ENCODE measurements at regions of chr16 and their contacts with region 1.

Region 1: DNA sequence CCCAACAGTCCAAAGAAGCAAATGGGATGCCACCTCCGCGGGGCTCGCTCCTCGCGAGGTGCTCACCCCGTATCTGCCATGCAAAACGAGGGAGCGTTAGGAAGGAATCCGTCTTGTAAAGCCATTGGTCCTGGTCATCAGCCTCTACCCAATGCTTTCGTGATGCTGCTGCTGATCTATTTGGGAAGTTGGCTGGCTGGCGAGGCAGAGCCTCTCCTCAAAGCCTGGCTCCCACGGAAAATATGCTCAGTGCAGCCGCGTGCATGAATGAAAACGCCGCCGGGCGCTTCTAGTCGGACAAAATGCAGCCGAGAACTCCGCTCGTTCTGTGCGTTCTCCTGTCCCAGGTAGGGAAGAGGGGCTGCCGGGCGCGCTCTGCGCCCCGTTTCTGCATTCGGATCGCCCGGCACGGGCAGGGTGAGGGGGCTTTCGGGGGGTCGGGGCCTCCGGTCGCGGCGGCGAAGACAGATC is at the start of gene CDH13:
- DNase-seq: peak; percentile 61
- H3K4me3 Mint-ChIP-seq: peak within 1 kb of the TSS; percentile 82
- H3K27ac Mint-ChIP-seq: peak within 1 kb of the TSS; percentile 96
- H3K4me1 Mint-ChIP-seq: peaks cover 36% of the 10 kb centered on the region
- H3K27me3 Mint-ChIP-seq: no peaks in the 10 kb centered on the region
- CTCF ChIP-seq: no peak
- total RNA-seq, gene CDH13: 49.3 and 55.2 TPM in 2 replicates

Region 2: DNA sequence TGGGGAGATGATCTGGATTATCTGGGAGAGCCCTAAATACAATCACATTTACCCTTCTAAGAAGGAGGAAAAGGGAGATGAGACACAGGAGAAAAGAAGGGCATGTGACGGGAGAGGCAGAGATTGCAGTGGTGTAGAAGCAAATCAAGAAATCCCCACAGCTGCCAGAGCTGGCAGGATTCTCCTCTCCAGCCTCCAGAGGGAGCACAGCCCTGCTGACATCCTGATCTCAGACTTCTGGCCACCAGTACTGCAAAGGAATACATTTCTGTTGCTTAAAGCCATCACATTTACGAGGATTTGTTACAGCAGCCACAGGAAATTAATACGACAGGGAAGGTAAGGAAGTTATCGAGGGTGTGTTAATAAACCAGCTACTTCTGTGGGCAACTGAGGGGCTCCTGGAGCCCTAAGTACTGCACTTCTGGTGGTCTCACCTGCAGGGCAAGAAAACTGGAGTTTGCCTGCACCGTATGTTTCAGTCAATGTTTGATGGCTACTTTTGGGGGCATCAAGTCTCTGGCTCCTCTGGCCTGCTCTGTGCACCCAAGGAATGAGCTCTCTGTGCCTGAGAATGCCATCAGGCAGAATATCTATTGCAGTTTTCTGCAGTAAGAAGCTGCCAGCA is 22.9 kb before region 1 on chr16:
- CTCF ChIA-PET with region 1: interaction called, 17 read pairs
- POLR2A ChIA-PET with region 1: interaction called, 3 read pairs
- intact Hi-C with region 1: no loop called
- DNase-seq: peak; percentile 64
- H3K4me3 Mint-ChIP-seq: no peak overlapping the region
- H3K27ac Mint-ChIP-seq: no peak overlapping the region
- H3K4me1 Mint-ChIP-seq: no peaks in the 10 kb centered on the region
- H3K27me3 Mint-ChIP-seq: no peaks in the 10 kb centered on the region
- CTCF ChIP-seq: peak; percentile 59

Region 3: DNA sequence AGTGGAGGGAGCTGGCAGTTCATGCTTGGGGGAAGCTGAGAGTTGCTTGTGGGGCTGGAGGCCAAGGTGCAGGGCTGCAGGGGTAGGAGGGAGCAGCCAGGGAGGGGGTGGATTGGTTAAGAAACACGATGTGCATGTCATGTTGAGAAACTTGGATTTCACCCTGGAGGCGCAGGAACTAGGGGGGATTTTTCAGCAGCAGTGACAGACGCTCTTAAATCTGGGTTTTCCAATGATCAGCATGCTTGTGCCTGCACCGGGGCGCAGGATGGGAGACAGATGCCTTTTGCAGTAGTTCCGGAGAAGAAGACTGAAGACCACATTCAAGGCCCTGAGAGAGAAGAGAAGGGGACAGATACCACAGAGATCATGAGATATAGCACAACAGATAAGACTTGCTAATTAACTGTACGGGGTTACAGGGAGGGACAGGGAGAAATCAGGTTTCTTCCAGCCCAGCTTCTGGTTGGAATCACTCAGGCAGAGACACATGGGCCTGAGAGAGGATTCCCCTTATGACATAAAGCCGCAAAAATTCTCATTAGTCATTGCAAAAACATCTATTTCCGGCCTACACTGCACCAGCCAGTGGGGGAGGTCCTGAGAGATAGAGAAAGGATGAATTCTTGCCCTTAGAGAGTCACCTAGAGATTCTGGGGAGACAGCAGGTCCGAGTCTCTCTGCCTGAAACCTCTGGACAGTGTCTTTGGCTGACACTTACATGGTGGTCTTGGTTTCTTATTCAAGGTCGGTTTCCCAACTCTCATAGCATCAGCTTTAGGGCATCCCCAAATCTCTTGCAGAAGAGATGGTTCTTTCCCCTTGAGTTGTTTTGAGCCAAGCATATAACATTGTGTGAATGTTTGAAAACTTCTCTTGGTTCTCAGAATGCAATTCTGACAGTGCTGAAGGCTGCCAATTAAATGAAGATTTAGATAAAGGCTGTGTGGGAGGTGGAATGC is 27.0 kb after region 1 on chr16:
- CTCF ChIA-PET with region 1: interaction called, 34 read pairs
- POLR2A ChIA-PET with region 1: interaction called, 6 read pairs
- intact Hi-C with region 1: no loop called
- DNase-seq: peak; percentile 89
- H3K4me3 Mint-ChIP-seq: peak overlapping the region; percentile 59
- H3K27ac Mint-ChIP-seq: peak overlapping the region; percentile 88
- H3K4me1 Mint-ChIP-seq: peaks cover 52% of the 10 kb centered on the region
- H3K27me3 Mint-ChIP-seq: no peaks in the 10 kb centered on the region
- CTCF ChIP-seq: no peak

Region 4: DNA sequence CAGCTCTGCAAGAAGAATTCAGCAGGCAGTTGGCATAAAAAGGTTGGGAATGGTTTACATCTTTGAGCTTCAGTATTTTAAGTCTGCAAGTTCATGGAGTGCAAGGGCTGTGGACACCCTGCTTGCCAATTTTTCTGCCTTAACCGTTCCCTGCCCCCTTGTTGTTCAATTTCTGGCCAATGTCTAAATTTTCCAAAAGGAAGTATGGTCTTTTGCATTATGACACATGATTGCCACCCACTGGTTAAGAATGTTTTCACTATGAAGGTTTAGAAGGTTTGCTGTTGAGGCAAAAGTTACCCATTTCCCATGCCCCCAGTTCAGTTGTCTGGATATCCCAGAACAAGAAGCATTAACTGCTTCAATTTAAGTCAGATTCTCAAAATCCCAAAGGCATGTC is 441.9 kb after region 1 on chr16:
- CTCF ChIA-PET with region 1: no interaction called
- POLR2A ChIA-PET with region 1: no interaction called
- intact Hi-C with region 1: loop called (anchors 5 kb)
- DNase-seq: peak; percentile 16
- H3K4me3 Mint-ChIP-seq: no peak overlapping the region
- H3K27ac Mint-ChIP-seq: no peak overlapping the region
- H3K4me1 Mint-ChIP-seq: peaks cover 10% of the 10 kb centered on the region
- H3K27me3 Mint-ChIP-seq: no peaks in the 10 kb centered on the region
- CTCF ChIP-seq: peak; percentile 20

Region 5: DNA sequence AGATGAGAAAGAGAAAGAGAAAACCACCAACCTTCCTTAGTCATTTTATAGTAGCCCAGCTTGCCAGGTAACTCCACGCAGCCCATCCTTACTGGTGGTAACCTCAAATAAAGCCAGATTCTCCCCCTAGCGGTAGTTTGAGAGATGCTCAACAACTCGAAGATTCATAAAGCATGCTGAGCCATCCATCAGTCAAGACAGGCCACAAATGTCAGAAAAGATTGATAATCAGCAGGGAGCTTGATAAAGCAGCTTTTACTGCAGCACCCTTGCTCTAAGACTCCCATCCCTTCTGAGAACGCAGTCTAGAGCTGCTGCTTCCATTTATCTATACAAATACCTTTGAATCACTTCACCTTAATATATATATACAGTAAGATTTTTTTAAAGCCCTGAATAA is 729.4 kb after region 1 on chr16:
- CTCF ChIA-PET with region 1: interaction called, 5 read pairs
- POLR2A ChIA-PET with region 1: interaction called, 3 read pairs
- intact Hi-C with region 1: loop called (anchors 5 kb)
- DNase-seq: peak; percentile 77
- H3K4me3 Mint-ChIP-seq: no peak overlapping the region
- H3K27ac Mint-ChIP-seq: no peak overlapping the region
- H3K4me1 Mint-ChIP-seq: no peaks in the 10 kb centered on the region
- H3K27me3 Mint-ChIP-seq: no peaks in the 10 kb centered on the region
- CTCF ChIP-seq: peak; percentile 43